ENCODE measurements at regions of chr2 and their contacts with region 1.

Region 1: DNA sequence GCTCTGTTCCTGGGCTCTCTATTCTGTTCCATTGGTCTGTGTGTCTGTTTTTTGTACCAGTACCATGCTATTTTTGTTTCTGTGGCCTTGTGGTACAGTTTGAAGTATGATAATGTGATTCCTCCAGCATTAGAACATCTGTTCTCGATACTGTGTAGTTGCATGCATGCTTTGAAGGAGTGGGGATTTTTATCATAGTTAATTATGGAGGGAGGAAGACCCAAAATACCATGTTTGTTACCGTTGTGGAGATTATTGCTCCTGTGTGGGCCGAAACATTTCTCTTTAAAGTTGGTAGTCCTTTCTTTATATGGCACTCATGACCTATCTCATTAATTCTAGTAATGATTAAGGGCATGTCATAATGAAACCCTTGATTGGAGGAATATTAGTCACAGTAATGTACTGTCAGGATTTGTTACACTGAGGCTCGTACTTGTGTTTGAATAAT is 87.6 kb downstream of the TTC27 start:
- DNase-seq: no peak

Region 2: DNA sequence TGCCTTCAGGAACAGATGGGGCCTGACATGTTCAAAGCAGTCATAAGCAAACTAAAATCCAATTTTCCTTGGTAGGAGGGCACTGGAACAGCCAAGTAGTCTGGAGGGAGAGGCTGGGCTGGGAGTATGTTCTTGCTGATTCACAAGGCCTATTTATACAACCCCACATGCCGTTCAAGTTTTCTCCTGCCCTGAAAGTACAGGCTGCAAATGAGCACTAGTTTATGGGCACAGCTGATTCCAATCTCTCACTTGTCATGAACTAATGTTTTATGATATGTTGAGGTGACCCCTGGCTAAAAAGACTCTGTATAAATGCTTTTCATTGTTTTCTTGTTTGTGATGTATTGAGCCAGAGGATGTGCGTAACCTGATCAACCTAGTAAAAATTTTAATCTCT is 951.2 kb before region 1 on chr2:
- intact Hi-C with region 1: loop called in 1 of 2 experiments (anchors 10 kb)
- DNase-seq: no peak

Region 3: GRCh38 chr2:33384599-33384961 is 669.2 kb after region 1 on chr2:
- intact Hi-C with region 1: no loop called
- DNase-seq: no peak